ENCODE measurements at regions of chr5 and their contacts with region 1.

Region 1: DNA sequence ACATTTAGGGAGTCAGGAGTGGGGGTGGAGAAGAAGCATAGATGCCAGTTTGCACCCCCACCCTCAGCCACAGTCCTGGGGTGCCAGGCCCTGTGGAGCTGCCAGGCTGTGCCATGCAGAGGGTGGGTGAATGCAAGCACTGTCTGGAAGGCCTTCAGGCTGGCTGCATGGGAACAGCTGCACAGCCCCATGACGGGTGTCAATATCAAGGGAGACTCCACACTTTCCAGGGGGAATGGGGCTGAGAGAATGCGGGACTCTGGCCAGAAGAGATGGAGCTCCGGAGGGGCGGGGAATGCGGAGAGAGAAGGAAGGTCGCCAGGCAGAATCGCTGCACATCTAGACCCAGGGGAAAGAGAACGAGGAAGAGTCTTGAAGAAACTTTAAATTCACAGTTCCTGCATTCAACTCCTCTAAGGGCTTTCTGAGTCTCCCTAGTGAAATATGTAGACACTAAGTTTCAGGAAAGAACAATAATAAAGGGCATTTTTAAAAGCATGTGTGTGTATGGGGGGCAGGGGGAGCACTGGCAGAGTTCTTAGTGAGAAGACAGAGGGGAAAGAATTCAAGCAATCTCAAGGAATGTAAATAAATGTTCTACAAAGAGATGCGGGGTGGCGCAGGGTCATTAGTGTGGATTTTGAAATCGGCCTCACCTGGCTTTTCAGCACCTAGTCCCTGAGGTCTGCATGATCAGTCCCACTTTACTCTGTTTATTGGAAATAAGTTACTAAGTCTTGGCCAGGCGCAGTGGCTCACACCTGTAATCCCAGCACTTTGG is 59.1 kb downstream of the BOD1 start:
- DNase-seq: peak; percentile 64 to 75
- H3K4me3 ChIP-seq: no peak overlapping the region
- H3K4me3 Mint-ChIP-seq: peak overlapping the region; percentile 3
- H3K27ac Mint-ChIP-seq: peak overlapping the region; percentile 24
- H3K4me1 ChIP-seq: peaks cover 19% of the 10 kb centered on the region
- H3K4me1 Mint-ChIP-seq: peaks cover 2% of the 10 kb centered on the region
- H3K27me3 ChIP-seq: no peaks in the 10 kb centered on the region; the same call in 1 of the 2 replicates
- H3K27me3 Mint-ChIP-seq: no peaks in the 10 kb centered on the region
- CTCF ChIP-seq: no peak

Region 2: GRCh38 chr5:173536312-173536641 is 21.0 kb before region 1 on chr5:
- CTCF ChIA-PET with region 1: no interaction called
- POLR2A ChIA-PET with region 1: no interaction called
- intact Hi-C with region 1: loop called (anchors 1 kb)
- DNase-seq: no peak
- H3K4me3 ChIP-seq: no peak overlapping the region
- H3K4me3 Mint-ChIP-seq: peak overlapping the region; percentile 0
- H3K27ac Mint-ChIP-seq: peak overlapping the region; percentile 34
- H3K4me1 ChIP-seq: peaks cover 35% of the 10 kb centered on the region
- H3K4me1 Mint-ChIP-seq: peaks cover 18% of the 10 kb centered on the region
- H3K27me3 ChIP-seq: no peaks in the 10 kb centered on the region
- H3K27me3 Mint-ChIP-seq: no peaks in the 10 kb centered on the region
- CTCF ChIP-seq: no peak